ENCODE measurements at regions of chr1 and their contacts with region 1.

Region 1: GRCh38 chr1:200669314-200670241 is at the start of gene DDX59:
- DNase-seq: peak; percentile 95 to 97 (median 96)
- ATAC-seq: peak; percentile 93
- H3K4me3 ChIP-seq: peak within 1 kb of the TSS; percentile 85
- H3K4me1 ChIP-seq: peaks cover 16% of the 10 kb centered on the region
- CTCF ChIP-seq: no peak
- total RNA-seq, gene DDX59: 17.7 to 28.5 (median 26.2) TPM

Region 2: DNA sequence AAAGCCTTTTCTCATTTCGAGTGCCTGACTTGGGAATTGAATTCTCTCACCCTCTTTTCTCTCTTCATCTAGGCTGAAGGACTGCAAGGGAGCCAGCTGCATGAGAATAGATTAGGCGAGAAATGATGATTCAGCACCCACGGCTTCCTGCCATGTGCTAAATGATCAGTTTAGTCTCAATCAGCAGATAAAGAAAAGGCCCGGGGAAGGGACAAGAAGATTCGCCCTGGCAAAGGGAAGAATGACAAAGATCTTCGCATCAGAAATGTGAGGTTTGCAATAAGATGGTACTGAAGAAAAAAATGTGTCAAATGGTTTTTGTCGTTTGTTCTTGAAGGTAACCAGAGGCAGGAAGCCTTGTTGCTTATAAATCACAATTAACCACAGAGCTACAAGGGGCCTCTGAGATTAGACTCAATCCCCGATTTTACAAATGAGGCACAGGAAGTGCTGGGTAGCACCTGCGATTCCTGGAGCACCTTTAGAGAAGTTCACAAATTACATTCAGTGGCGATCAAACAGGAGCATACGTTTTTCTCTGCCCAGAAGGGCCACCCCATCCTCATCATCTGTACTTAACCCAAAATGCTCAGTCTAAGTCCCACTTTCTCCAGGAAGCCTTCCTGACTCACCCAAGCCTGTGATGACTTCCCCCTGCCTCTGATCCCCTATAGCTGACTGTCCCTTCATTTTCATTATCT is 443.2 kb before region 1 on chr1:
- intact Hi-C with region 1: no loop called
- DNase-seq: no peak
- ATAC-seq: no peak
- H3K4me3 ChIP-seq: no peak overlapping the region
- H3K4me1 ChIP-seq: no peaks in the 10 kb centered on the region
- CTCF ChIP-seq: no peak

Region 3: DNA sequence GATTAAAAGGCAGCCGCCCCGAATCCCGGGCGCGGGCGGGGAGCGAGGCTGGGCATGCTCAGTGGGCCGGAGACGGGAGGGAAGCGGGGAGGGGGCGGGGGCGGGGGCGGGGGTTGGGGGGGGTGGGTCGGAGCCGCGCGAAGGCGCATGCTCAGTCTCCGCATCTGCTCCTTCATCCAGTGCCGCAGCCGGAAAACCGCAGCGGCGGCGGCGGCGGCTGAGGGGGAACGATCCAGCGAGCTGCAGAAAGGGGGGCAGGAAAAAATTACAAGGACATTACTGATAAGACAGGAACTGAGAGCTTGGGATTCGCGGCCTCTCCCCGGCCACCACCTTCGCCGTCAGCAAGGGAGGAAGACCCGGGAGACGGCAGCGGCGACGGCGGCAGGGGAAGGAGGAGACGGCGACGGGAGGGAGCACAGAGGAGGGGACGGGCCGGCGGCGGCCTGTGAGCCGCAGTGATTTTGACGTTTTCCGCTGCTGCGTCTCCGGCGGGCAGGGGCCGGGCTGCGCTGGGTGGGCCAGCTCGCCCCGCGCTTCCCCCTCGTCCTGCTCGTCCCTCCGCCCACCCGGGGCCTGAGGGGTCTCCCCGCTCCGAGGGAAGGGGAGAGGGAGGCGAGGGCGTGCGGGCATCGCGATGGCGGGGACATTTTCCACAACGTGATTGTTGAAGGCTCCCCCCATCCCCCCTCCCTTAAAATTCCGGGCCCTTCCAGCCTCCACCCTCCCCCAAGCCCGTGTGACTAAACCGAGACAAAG is 69.3 kb after region 1 on chr1 and contains the start of gene CAMSAP2:
- intact Hi-C with region 1: loop called in 1 of 2 experiments (anchors 5 kb)
- DNase-seq: peak; percentile 79 to 88 (median 83)
- ATAC-seq: peak; percentile 86
- H3K4me3 ChIP-seq: peak within 1 kb of the TSS; percentile 56
- H3K4me1 ChIP-seq: peaks cover 13% of the 10 kb centered on the region
- CTCF ChIP-seq: no peak
- total RNA-seq, gene CAMSAP2: 5.0 to 34.0 (median 7.1) TPM

Measured in mucosa of descending colon (tissue), 3 donors.